Sciatic nerve (tissue), 2 donors: ENCODE measurements at regions of chrX and their contacts with region 1.

Region 1: DNA sequence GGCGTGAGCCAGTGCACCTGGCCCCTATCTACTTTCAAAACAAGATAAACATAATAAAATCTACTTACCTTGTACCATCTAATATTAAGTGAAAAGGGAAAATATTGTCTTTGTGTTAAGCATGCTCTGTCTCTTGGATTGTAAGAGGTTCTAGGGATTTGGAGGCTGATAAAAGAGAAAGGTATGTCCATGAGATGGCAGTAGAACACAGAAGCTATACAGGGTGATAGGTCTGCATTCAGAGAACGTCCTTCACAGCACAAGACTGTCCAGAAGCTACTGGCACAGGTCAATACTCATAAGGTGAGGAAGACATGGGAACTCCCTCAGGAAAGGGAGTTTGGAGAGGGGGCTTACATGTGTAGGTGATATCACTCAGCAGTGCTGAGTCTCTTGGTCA is 135.5 kb downstream of the TMEM47 start:
- DNase-seq: no peak
- ATAC-seq: no peak

Region 2: DNA sequence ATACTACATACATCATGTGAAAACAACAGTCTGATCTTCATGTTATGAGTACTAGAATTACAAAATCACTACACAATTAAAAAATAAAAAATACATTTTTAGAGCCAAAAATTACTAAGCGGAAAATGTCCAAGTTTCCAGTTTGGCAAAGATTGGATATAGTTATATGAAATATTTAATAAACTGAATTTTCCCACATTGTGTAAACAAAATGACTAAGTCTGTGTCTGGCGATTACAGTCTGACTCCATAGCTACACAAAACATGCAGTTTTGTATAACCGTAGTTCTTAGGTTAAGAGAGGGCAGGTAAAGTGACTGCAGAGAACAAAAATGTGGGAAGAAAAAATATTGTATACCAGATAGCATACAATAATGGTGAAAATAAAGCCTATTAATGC is 194.7 kb after region 1 on chrX:
- intact Hi-C with region 1: loop called (anchors 5 kb)
- DNase-seq: no peak
- ATAC-seq: no peak